GM12878 (cell line): ENCODE measurements at regions of chr11 and their contacts with region 1.

Region 1: DNA sequence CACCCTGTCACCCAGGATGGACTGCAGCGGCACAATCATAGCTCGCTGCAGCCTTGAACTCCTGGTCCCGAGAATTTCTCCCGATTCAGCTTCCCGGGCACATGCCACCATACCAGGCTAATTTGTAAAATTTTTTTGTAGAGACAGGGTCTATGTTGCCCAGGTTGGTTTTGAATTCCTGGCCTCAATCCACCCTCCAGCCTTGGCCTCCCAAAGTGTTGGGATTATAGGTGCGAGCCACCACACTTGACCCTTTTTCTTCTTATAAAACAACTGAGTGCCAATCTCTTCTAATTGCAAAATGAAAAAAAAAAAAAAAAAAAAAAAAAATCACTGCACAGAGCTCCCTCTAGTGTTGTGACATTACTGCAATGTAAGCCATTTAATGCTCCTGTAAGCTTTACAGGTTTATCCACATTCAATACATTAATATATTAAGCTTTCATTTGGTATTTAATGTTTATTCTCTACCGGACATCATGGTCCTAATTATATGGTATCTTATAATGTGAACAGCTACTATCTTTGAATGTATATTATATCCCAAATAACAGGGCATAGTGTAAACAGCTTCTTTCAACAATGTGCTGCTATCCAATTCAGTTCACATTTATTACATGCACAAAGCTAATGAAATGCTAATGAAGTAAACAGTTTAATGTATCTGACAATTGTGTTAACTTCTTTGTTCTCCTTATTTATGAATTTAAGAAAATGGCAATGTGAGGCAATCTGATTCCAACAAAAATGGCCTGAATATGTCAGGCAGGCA is 44.6 kb downstream of the COPB1 start:
- DNase-seq: no peak
- ATAC-seq: peak; percentile 65
- H3K4me3 ChIP-seq: no peak overlapping the region
- H3K27ac ChIP-seq: no peak overlapping the region
- H3K4me1 ChIP-seq: no peaks in the 10 kb centered on the region
- H3K27me3 ChIP-seq: no peaks in the 10 kb centered on the region
- CTCF ChIP-seq: peak; percentile 51 to 66 (median 56); a peak in 5 of 6 replicates
- EP300 ChIP-seq: no peak
- POLR2A ChIP-seq: no peak
- RAD21 ChIP-seq: peak; percentile 65

Region 2: GRCh38 chr11:13448876-13449275 is 1006.2 kb before region 1 on chr11:
- CTCF ChIA-PET with region 1: no interaction called
- POLR2A ChIA-PET with region 1: no interaction called
- RAD21 ChIA-PET with region 1: no interaction called
- SMC1A ChIA-PET with region 1: no interaction called
- in situ Hi-C with region 1: no loop called
- intact Hi-C with region 1: no loop called
- DNase-seq: no peak
- ATAC-seq: 0 out of 3 replicates have a peak, but pooled peaks have one; percentile 36
- H3K4me3 ChIP-seq: no peak overlapping the region
- H3K27ac ChIP-seq: no peak overlapping the region
- H3K4me1 ChIP-seq: no peaks in the 10 kb centered on the region; the same call in 1 of the 2 replicates
- H3K27me3 ChIP-seq: no peaks in the 10 kb centered on the region
- CTCF ChIP-seq: no peak
- EP300 ChIP-seq: no peak
- POLR2A ChIP-seq: no peak
- RAD21 ChIP-seq: no peak

Region 3: DNA sequence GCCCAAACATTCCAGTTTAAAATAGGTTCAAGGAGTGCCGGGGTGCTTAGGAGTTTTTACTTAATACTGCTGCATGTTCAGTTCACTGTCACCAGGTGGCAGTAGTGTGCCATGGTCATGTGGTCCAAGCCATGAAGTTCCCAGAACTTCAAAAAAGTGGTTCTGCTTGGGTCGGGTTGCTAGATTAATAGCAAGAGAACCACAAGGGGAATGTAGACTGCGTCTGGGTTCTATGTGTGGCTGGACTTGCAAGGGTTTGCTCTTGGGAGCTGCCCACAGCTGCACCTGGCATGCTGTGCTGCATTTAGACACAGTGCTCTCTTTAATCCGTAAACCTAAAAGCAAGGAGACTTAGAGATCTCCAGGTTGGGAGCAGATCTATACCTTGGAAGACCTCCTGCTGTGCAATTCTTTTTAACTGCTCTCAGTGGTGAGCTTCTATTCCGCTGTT is 499.1 kb before region 1 on chr11:
- CTCF ChIA-PET with region 1: interaction called, 12 read pairs
- POLR2A ChIA-PET with region 1: no interaction called
- RAD21 ChIA-PET with region 1: interaction called, 3 read pairs
- SMC1A ChIA-PET with region 1: interaction called, 4 read pairs
- in situ Hi-C with region 1: no loop called
- intact Hi-C with region 1: loop called (anchors 5 kb)
- DNase-seq: no peak
- ATAC-seq: peak; percentile 77
- H3K4me3 ChIP-seq: no peak overlapping the region
- H3K27ac ChIP-seq: no peak overlapping the region
- H3K4me1 ChIP-seq: no peaks in the 10 kb centered on the region
- H3K27me3 ChIP-seq: peaks cover 0 to 1% of the 10 kb centered on the region in 2 experiments; a peak in 2 of 4 replicates
- CTCF ChIP-seq: peak; percentile 80 to 83 (median 81)
- EP300 ChIP-seq: no peak
- POLR2A ChIP-seq: no peak
- RAD21 ChIP-seq: peak; percentile 80

Region 4: GRCh38 chr11:14249121-14249963 is 205.7 kb before region 1 on chr11:
- CTCF ChIA-PET with region 1: interaction called, 11 read pairs
- POLR2A ChIA-PET with region 1: interaction called, 3 read pairs
- RAD21 ChIA-PET with region 1: interaction called, 8 read pairs
- SMC1A ChIA-PET with region 1: interaction called, 14 read pairs
- in situ Hi-C with region 1: no loop called
- intact Hi-C with region 1: no loop called
- DNase-seq: no peak
- ATAC-seq: peak; percentile 71
- H3K4me3 ChIP-seq: no peak overlapping the region
- H3K27ac ChIP-seq: no peak overlapping the region
- H3K4me1 ChIP-seq: no peaks in the 10 kb centered on the region; the same call in 1 of the 2 replicates
- H3K27me3 ChIP-seq: no peaks in the 10 kb centered on the region; a peak in 1 of 4 replicates
- CTCF ChIP-seq: peak; percentile 70 to 93 (median 83)
- EP300 ChIP-seq: no peak
- POLR2A ChIP-seq: no peak
- RAD21 ChIP-seq: peak; percentile 99

Region 5: DNA sequence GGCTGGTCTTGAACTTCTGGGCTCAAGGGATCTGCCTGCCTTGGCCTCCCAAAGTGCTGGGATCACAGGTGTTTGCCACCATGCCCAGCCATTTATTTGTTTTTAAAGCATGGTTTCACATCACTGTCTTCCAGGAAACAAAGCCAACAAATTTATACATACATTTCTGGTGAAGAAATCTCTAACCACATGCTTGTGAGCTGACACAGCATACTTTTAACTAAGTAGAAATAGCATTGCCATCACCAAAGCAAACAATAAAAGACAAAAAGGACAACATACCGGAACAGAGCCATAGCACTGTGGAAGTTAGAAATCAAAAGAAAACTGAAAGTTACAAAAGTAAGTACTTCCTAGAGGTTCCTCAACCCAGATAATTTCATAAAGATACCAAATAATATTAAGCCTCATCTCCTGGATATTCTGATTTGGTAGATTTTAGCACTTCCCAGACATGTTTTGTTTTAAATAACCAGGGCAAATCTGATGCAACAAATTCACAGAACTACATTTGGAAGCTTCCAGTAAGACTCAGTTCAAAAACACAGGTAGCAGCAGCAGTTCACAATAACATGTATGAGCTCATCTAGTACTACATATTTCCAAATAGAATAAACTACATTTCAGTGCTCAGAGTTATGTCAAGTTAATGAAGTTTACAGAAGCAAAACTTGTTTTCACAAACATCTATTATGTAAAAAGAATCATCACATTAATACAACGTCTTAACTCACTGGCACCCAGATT is 166.7 kb before region 1 on chr11:
- CTCF ChIA-PET with region 1: interaction called, 15 read pairs
- POLR2A ChIA-PET with region 1: no interaction called
- RAD21 ChIA-PET with region 1: no interaction called
- SMC1A ChIA-PET with region 1: interaction called, 7 read pairs
- in situ Hi-C with region 1: no loop called
- intact Hi-C with region 1: no loop called
- DNase-seq: no peak
- ATAC-seq: no peak
- H3K4me3 ChIP-seq: no peak overlapping the region
- H3K27ac ChIP-seq: no peak overlapping the region
- H3K4me1 ChIP-seq: no peaks in the 10 kb centered on the region
- H3K27me3 ChIP-seq: no peaks in the 10 kb centered on the region
- CTCF ChIP-seq: no peak
- EP300 ChIP-seq: no peak
- POLR2A ChIP-seq: no peak
- RAD21 ChIP-seq: no peak

Region 6: DNA sequence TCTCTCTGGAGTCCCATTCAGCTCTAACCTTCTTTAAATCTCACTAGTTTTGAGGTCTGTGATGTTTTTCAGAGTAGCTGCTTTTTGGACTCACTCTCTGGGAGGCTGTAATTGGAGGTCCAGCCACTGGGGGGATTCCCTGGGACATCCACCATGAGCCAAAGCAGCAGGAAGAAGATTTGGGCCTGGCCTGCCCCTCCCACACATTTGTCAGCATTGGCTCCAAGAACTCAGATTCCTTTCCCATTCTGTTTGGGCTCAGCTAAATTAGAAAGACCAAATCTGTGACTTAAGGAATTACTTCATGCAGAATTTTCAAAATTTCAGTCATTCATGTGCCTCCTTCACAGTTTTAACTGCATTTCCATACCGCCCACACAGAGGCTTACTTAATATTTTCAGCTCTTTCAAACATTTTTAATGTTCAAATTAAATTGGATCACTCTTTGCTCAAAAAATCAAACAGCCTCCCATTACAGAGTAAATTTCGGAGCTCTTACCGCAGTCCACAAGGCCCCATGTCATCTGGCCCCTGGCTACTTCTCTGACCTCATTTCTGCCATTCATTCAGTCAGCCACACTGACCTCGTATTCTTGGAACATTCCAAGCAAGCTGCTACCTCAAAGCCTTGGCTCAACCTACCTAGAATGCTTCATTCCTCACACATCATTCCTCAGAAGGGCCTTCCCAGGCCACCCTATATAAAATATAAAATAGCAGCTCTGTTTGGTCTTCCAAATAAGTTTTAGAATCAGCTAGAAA is 41.6 kb before region 1 on chr11:
- CTCF ChIA-PET with region 1: interaction called, 18 read pairs
- POLR2A ChIA-PET with region 1: interaction called, 3 read pairs
- RAD21 ChIA-PET with region 1: interaction called, 4 read pairs
- SMC1A ChIA-PET with region 1: interaction called, 13 read pairs
- in situ Hi-C with region 1: no loop called
- intact Hi-C with region 1: no loop called
- DNase-seq: no peak
- ATAC-seq: peak; percentile 22; the same call in 1 of the 3 replicates
- H3K4me3 ChIP-seq: no peak overlapping the region
- H3K27ac ChIP-seq: no peak overlapping the region
- H3K4me1 ChIP-seq: peaks cover 10% of the 10 kb centered on the region
- H3K27me3 ChIP-seq: no peaks in the 10 kb centered on the region
- CTCF ChIP-seq: peak in 1 of 3 experiments; percentile 32; a peak in 1 of 6 replicates
- EP300 ChIP-seq: no peak
- POLR2A ChIP-seq: no peak
- RAD21 ChIP-seq: no peak

Region 7: GRCh38 chr11:14422052-14422813 is 32.8 kb before region 1 on chr11:
- CTCF ChIA-PET with region 1: interaction called, 18 read pairs
- POLR2A ChIA-PET with region 1: interaction called, 3 read pairs
- RAD21 ChIA-PET with region 1: interaction called, 5 read pairs
- SMC1A ChIA-PET with region 1: interaction called, 13 read pairs
- in situ Hi-C with region 1: no loop called
- intact Hi-C with region 1: no loop called
- DNase-seq: no peak
- ATAC-seq: no peak
- H3K4me3 ChIP-seq: no peak overlapping the region
- H3K27ac ChIP-seq: no peak overlapping the region
- H3K4me1 ChIP-seq: no peaks in the 10 kb centered on the region
- H3K27me3 ChIP-seq: no peaks in the 10 kb centered on the region
- CTCF ChIP-seq: no peak
- EP300 ChIP-seq: no peak
- POLR2A ChIP-seq: no peak
- RAD21 ChIP-seq: no peak

Region 8: DNA sequence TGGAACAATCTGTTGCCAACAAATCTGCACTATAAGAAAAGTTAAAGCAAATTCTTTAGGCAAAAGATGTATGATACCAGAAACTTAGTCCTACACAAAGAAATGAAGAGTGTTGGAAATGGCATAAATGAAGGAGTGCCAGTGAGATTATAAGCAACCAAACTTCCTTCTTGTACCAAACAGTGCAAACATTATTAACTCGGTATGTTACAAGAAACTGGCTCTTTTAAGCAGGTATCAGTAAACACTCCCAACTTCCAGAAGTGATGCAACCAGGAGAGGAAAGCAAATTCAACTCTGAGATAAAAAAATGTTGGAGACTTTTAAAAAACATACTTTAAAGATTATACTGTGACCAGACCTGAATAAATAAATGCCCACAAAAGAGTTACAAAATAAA is 16.1 kb after region 1 on chr11:
- CTCF ChIA-PET with region 1: interaction called, 53 read pairs
- POLR2A ChIA-PET with region 1: interaction called, 5 read pairs
- RAD21 ChIA-PET with region 1: interaction called, 3 read pairs
- SMC1A ChIA-PET with region 1: interaction called, 8 read pairs
- in situ Hi-C with region 1: no loop called
- intact Hi-C with region 1: no loop called
- DNase-seq: no peak
- ATAC-seq: no peak
- H3K4me3 ChIP-seq: no peak overlapping the region
- H3K27ac ChIP-seq: no peak overlapping the region
- H3K4me1 ChIP-seq: no peaks in the 10 kb centered on the region
- H3K27me3 ChIP-seq: no peaks in the 10 kb centered on the region
- CTCF ChIP-seq: no peak
- EP300 ChIP-seq: no peak
- POLR2A ChIP-seq: no peak
- RAD21 ChIP-seq: no peak